ENCODE measurements at regions of chr5 and their contacts with region 1.

Region 1: DNA sequence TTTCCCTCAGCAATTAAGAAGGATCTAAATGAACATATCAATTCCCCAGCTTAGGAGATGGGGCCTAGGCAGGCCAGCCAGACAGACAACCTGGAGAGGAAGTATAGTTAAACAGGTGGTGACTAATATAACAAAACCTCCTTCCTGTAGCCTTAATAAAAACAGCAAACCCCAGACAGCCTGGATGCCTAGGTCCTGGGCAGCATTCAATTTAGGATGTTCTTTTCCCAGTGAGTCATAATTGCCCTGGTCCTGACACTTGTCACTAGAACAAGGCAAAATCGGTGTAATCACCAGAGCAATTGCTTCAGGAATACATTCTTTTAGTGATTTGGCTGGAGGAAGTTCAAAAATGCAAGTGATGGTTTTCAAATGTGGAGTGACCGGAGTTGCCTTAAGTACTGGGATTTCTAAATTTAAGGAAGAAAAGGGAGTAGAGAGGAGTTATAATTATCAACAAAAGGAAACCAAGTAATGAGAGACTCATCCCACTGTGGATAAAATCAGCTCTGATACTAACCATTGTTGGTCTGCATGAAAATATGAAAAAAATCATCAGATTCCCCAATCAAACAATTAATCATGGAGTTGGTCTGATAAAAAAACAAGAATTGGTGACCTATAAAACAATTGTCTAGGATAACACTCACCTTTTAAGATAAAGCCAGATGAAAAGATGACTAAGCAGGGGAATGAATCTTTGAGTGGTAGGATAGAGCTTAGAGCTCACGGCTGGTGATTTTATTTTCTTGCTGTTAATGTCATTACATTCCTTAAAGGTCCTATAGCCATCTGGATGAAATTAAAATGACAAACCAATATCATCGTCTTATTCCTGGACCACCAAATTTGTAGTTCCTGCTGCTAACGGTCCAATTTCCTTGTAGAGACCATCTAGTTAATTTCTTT is 39.0 kb upstream of the TARS1 start:
- DNase-seq: peak; percentile 76 to 92
- H3K4me3 ChIP-seq: no peak overlapping the region
- H3K27ac ChIP-seq: peak overlapping the region; percentile 61
- H3K4me1 ChIP-seq: peaks cover 32% of the 10 kb centered on the region
- H3K27me3 ChIP-seq: no peaks in the 10 kb centered on the region
- CTCF ChIP-seq: no peak

Region 2: GRCh38 chr5:33343676-33344327 is 57.9 kb before region 1 on chr5:
- CTCF ChIA-PET with region 1: no interaction called
- POLR2A ChIA-PET with region 1: no interaction called
- intact Hi-C with region 1: loop called (anchors 1 kb)
- DNase-seq: peak in 1 of 2 experiments; percentile 56
- H3K4me3 ChIP-seq: no peak overlapping the region
- H3K27ac ChIP-seq: no peak overlapping the region
- H3K4me1 ChIP-seq: 0 out of 2 replicates have a peak, but pooled peaks cover 8% of the 10 kb centered on the region
- H3K27me3 ChIP-seq: no peaks in the 10 kb centered on the region
- CTCF ChIP-seq: no peak

Region 3: GRCh38 chr5:33415811-33416354 is 14.1 kb after region 1 on chr5:
- CTCF ChIA-PET with region 1: no interaction called
- POLR2A ChIA-PET with region 1: no interaction called
- intact Hi-C with region 1: no loop called
- DNase-seq: no peak
- H3K4me3 ChIP-seq: no peak overlapping the region
- H3K27ac ChIP-seq: no peak overlapping the region
- H3K4me1 ChIP-seq: no peaks in the 10 kb centered on the region
- H3K27me3 ChIP-seq: no peaks in the 10 kb centered on the region
- CTCF ChIP-seq: no peak

Measured in PC-9 (cell line).